PC-9 (cell line): ENCODE measurements at regions of chr11 and their contacts with region 1.

Region 1: GRCh38 chr11:118679483-118679882 is at the start of gene TREH:
- DNase-seq: peak in 1 of 2 experiments; percentile 15
- H3K4me3 ChIP-seq: no peak within 1 kb of the TSS
- H3K27ac ChIP-seq: no peak within 1 kb of the TSS
- H3K4me1 ChIP-seq: no peaks in the 10 kb centered on the region
- H3K27me3 ChIP-seq: no peaks in the 10 kb centered on the region
- CTCF ChIP-seq: no peak
- total RNA-seq, gene TREH: not detected in 2 replicates

Region 2: GRCh38 chr11:118114266-118114665 is 565.2 kb before region 1 on chr11:
- CTCF ChIA-PET with region 1: interaction called, 17 read pairs
- POLR2A ChIA-PET with region 1: no interaction called
- intact Hi-C with region 1: no loop called
- DNase-seq: no peak
- H3K4me3 ChIP-seq: no peak overlapping the region
- H3K27ac ChIP-seq: no peak overlapping the region
- H3K4me1 ChIP-seq: peaks cover 11% of the 10 kb centered on the region
- H3K27me3 ChIP-seq: no peaks in the 10 kb centered on the region
- CTCF ChIP-seq: no peak

Region 3: GRCh38 chr11:118258410-118258809 is 421.1 kb before region 1 on chr11:
- CTCF ChIA-PET with region 1: no interaction called
- POLR2A ChIA-PET with region 1: no interaction called
- intact Hi-C with region 1: no loop called
- DNase-seq: peak in 1 of 2 experiments; percentile 34
- H3K4me3 ChIP-seq: no peak overlapping the region
- H3K27ac ChIP-seq: no peak overlapping the region
- H3K4me1 ChIP-seq: peaks cover 14% of the 10 kb centered on the region
- H3K27me3 ChIP-seq: no peaks in the 10 kb centered on the region
- CTCF ChIP-seq: peak; percentile 60

Region 4: GRCh38 chr11:118634431-118635236 is 44.8 kb before region 1 on chr11:
- CTCF ChIA-PET with region 1: interaction called, 14 read pairs
- POLR2A ChIA-PET with region 1: no interaction called
- intact Hi-C with region 1: no loop called
- DNase-seq: no peak
- H3K4me3 ChIP-seq: no peak overlapping the region
- H3K27ac ChIP-seq: no peak overlapping the region
- H3K4me1 ChIP-seq: 0 out of 2 replicates have a peak, but pooled peaks cover 4% of the 10 kb centered on the region
- H3K27me3 ChIP-seq: no peaks in the 10 kb centered on the region
- CTCF ChIP-seq: no peak

Region 5: GRCh38 chr11:118735203-118735602 is 55.7 kb after region 1 on chr11:
- CTCF ChIA-PET with region 1: no interaction called
- POLR2A ChIA-PET with region 1: no interaction called
- intact Hi-C with region 1: no loop called
- DNase-seq: peak in 1 of 2 experiments; percentile 52
- H3K4me3 ChIP-seq: no peak overlapping the region
- H3K27ac ChIP-seq: no peak overlapping the region
- H3K4me1 ChIP-seq: peaks cover 14% of the 10 kb centered on the region
- H3K27me3 ChIP-seq: no peaks in the 10 kb centered on the region
- CTCF ChIP-seq: no peak